ENCODE measurements at regions of chr7 and their contacts with region 1.

Region 1: GRCh38 chr7:74417419-74417971 is 36.2 kb upstream of the GTF2IRD1 start:
- DNase-seq: peak; percentile 77 to 95
- ATAC-seq: peak; percentile 94 to 97
- H3K4me3 ChIP-seq: no peak overlapping the region
- H3K27ac ChIP-seq: peak overlapping the region; percentile 70 to 81
- H3K4me1 ChIP-seq: peaks cover 9% of the 10 kb centered on the region
- CTCF ChIP-seq: peak; percentile 93
- EP300 ChIP-seq: no peak
- POLR2A ChIP-seq: no peak
- RAD21 ChIP-seq: peak; percentile 99

Region 2: GRCh38 chr7:74429153-74429747 is 11.8 kb after region 1 on chr7:
- CTCF ChIA-PET with region 1: interaction called, 49 read pairs
- POLR2A ChIA-PET with region 1: no interaction called
- DNase-seq: peak in 1 of 2 experiments; percentile 64
- ATAC-seq: peak; percentile 61 to 67
- H3K4me3 ChIP-seq: no peak overlapping the region
- H3K27ac ChIP-seq: peak overlapping the region; percentile 69 to 80
- H3K4me1 ChIP-seq: peaks cover 21% of the 10 kb centered on the region
- CTCF ChIP-seq: no peak
- EP300 ChIP-seq: no peak
- POLR2A ChIP-seq: no peak
- RAD21 ChIP-seq: no peak

Region 3: DNA sequence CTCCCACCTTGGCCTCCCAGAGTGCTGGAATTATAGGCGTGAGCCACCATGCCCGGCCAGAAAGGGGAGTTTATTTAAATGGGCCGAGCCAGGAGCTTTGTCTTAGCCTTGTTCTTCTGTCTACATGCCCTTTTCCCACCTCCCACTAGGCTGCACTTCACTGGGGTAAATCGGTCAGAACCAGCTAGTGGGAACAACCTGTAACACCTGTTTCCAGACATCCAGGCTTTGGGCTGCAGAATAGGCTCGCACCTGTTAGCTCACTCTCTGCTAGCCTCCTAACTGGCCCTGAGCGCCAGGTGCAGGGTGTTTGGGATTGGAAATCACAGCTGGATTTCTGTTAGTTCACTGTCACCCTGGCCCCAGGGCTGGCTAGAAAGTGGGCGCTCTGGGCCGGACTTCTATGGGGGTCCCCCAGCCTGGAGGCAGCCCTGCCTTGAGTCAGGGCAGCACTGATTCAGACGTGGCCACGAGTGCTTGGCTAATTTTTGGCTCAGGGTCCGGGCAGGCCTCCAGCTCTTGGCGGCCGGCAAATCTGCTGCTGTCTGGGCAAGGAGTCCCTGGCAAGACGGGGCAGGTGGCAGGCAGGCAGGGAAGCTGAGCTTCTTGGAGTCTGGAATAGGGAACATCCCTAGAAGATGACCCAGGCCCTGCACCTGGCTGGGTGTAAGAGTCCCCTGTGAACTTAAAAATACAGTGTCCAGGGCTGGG is 84.8 kb after region 1 on chr7:
- CTCF ChIA-PET with region 1: interaction called, 10 read pairs
- POLR2A ChIA-PET with region 1: no interaction called
- DNase-seq: no peak
- ATAC-seq: no peak; a peak in 1 of 6 replicates
- H3K4me3 ChIP-seq: no peak overlapping the region
- H3K27ac ChIP-seq: peak overlapping the region in 1 of 2 experiments; percentile 58; a peak in 2 of 6 replicates
- H3K4me1 ChIP-seq: peaks cover 11% of the 10 kb centered on the region
- CTCF ChIP-seq: no peak
- EP300 ChIP-seq: no peak
- POLR2A ChIP-seq: no peak
- RAD21 ChIP-seq: no peak

Region 4: DNA sequence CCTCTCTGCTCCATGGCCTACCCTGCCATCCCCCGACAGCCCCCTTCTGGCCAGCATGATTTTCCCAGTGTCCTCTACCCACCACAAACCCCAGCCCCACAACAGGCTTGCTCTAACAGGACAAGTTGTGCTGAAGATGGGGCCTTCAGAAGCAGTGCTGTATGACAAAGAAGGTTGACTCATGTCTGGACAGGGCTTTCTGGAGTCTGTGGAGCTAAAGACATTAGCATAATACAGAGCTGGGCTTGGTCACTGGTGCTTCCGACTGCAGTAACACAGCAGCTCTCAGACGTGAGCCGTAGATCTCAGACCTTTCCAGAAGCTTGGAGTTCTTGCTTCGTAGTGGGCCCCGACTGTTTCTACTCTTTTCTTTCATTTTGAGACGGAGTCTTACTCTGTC is 136.7 kb after region 1 on chr7:
- CTCF ChIA-PET with region 1: interaction called, 14 read pairs
- POLR2A ChIA-PET with region 1: no interaction called
- DNase-seq: no peak
- ATAC-seq: peak; percentile 21 to 26; a peak in 3 of 6 replicates
- H3K4me3 ChIP-seq: no peak overlapping the region
- H3K27ac ChIP-seq: no peak overlapping the region
- H3K4me1 ChIP-seq: no peaks in the 10 kb centered on the region
- CTCF ChIP-seq: no peak
- EP300 ChIP-seq: no peak
- POLR2A ChIP-seq: no peak
- RAD21 ChIP-seq: no peak

Region 5: DNA sequence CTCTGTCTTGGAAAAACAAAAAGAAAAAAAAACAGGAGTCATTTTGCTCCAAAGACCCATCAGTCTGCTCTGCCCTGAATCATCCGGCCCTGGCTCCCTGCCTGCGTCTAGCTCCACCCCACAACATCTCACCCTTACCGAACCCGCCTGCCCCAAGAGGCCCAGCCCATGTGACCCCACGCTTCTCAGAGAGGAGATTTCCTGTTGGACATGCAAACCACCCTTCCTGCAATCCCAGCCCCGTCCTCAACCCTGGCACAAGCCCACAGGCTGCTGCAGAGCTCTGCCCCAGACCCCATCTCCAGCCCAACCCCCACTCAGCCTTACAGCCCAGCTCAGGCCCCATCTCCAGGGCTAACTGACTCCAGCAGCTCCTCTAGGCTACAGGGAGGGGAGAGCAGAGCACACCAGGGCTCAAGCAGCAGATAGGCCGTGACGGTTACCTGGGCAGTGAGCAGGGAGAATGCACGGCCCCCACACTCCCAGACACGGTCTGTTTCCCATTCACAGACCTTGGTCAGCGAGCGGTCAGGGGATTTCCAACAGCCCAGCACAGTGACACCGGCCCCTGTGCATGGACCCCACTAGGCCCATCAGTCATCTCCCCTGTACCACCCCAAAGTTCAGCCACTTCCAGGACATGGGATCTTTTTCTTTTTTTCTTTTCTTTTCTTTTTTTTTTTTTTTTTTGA is 170.1 kb after region 1 on chr7:
- CTCF ChIA-PET with region 1: interaction called, 12 read pairs
- POLR2A ChIA-PET with region 1: no interaction called
- DNase-seq: peak; percentile 88 to 96
- ATAC-seq: peak; percentile 95 to 96
- H3K4me3 ChIP-seq: no peak overlapping the region
- H3K27ac ChIP-seq: peak overlapping the region; percentile 83 to 95
- H3K4me1 ChIP-seq: peaks cover 54% of the 10 kb centered on the region
- CTCF ChIP-seq: no peak
- EP300 ChIP-seq: no peak
- POLR2A ChIP-seq: no peak; the same call in 1 of the 2 replicates
- RAD21 ChIP-seq: no peak; a peak in 1 of 5 replicates

Measured in A549 (cell line).